T-cell (primary cell): ENCODE measurements at regions of chr2 and their contacts with region 1.

Region 1: GRCh38 chr2:219229305-219230058 is at the starts of genes ANKZF1 and ATG9A:
- DNase-seq: peak; percentile 94 to 100 (median 99)
- ATAC-seq: peak; percentile 97 to 98 (median 98)
- H3K4me3 ChIP-seq: peak within 1 kb of the TSS; percentile 72 to 85
- H3K4me3 Mint-ChIP-seq: peak within 1 kb of the TSS; percentile 97 to 99 (median 98)
- H3K27ac ChIP-seq: peak within 1 kb of the TSS; percentile 71
- H3K27ac Mint-ChIP-seq: peak within 1 kb of the TSS; percentile 98 to 99
- H3K4me1 ChIP-seq: peaks cover 16 to 37% of the 10 kb centered on the region in 2 experiments
- H3K4me1 Mint-ChIP-seq: peaks cover 55 to 76% (median 62%) of the 10 kb centered on the region in 3 donors
- H3K27me3 ChIP-seq: no peaks in the 10 kb centered on the region
- H3K27me3 Mint-ChIP-seq: no peaks in the 10 kb centered on the region
- total RNA-seq, gene ANKZF1: 119 to 220 (median 194) TPM
- total RNA-seq, gene ATG9A: 52.5 to 72.9 (median 57.6) TPM

Region 2: GRCh38 chr2:219206442-219207253 is 22.8 kb before region 1 on chr2 and contains the start of gene ZFAND2B:
- CTCF ChIA-PET with region 1: interaction called in 1 of 2 experiments, 5 read pairs
- POLR2A ChIA-PET with region 1: interaction called in 1 of 2 experiments, 12 read pairs
- DNase-seq: peak; percentile 87 to 97 (median 93)
- ATAC-seq: peak; percentile 92 to 96 (median 94)
- H3K4me3 ChIP-seq: peak within 1 kb of the TSS; percentile 70 to 80
- H3K4me3 Mint-ChIP-seq: peak within 1 kb of the TSS; percentile 84 to 90 (median 86)
- H3K27ac ChIP-seq: peak within 1 kb of the TSS; percentile 86
- H3K27ac Mint-ChIP-seq: peak within 1 kb of the TSS; percentile 95 to 99
- H3K4me1 ChIP-seq: peaks cover 14 to 54% of the 10 kb centered on the region in 2 experiments
- H3K4me1 Mint-ChIP-seq: peaks cover 45 to 49% (median 47%) of the 10 kb centered on the region in 3 donors
- H3K27me3 ChIP-seq: no peaks in the 10 kb centered on the region
- H3K27me3 Mint-ChIP-seq: no peaks in the 10 kb centered on the region
- total RNA-seq, gene ZFAND2B: 61.7 to 91.6 (median 85.6) TPM

Region 3: DNA sequence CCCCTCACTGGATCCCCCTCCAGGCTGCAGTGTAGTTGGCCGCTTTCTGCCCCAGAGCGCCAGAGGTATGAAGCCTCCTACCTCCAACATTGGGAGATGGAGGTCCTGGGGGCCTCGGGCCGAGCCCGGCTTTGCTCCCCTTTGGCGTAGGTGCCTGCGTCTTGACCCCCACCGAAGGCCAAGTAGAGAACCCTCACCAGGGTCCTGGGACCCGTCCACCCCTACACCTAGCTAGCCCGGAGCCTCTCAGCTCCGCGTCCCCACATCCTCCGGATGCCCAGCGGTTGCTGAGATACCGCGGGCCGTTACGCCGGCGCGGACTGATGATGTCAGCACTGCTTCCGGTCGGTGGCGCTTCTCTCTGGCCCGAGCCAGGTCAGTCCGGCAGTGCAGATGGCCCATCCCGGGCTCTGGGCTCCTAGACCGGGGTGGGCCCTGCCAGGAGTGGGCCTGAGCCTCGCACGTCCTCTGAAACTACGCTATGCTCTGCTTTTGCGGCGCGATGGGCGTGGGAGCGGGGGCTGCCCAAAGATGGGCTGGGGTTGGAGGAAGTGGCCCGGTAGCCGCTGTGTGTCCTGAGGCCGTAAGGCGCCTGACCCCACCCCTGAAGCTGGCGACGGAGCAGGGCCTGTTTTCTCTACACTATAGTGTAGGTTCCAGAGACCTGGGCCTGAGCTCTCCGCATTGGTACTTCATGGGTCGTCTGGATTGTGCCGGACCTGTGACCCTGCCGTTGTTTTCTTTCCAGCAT is 15.8 kb after region 1 on chr2 and contains the starts of genes GLB1L and STK16:
- CTCF ChIA-PET with region 1: interaction called in 1 of 2 experiments, 13 read pairs
- POLR2A ChIA-PET with region 1: interaction called, 10 to 15 read pairs
- DNase-seq: peak; percentile 63 to 93 (median 81)
- ATAC-seq: peak; percentile 56 to 70 (median 66)
- H3K4me3 ChIP-seq: peak within 1 kb of the TSS; percentile 89 to 90
- H3K4me3 Mint-ChIP-seq: peak within 1 kb of the TSS; percentile 75 to 92 (median 87)
- H3K27ac ChIP-seq: peak within 1 kb of the TSS; percentile 94
- H3K27ac Mint-ChIP-seq: peak within 1 kb of the TSS; percentile 98 to 99
- H3K4me1 ChIP-seq: peaks cover 42 to 62% of the 10 kb centered on the region in 2 experiments
- H3K4me1 Mint-ChIP-seq: peaks cover 56 to 66% (median 59%) of the 10 kb centered on the region in 3 donors
- H3K27me3 ChIP-seq: no peaks in the 10 kb centered on the region
- H3K27me3 Mint-ChIP-seq: no peaks in the 10 kb centered on the region
- total RNA-seq, gene GLB1L: 1.1 to 3.0 (median 1.8) TPM
- total RNA-seq, gene STK16: 19.3 to 26.6 (median 21.3) TPM

Region 4: GRCh38 chr2:219253753-219254590 is 24.5 kb after region 1 on chr2 and contains the start of gene TUBA4A:
- CTCF ChIA-PET with region 1: interaction called, 3 to 11 read pairs
- POLR2A ChIA-PET with region 1: interaction called, 10 to 11 read pairs
- DNase-seq: peak; percentile 82 to 96 (median 89)
- ATAC-seq: peak; percentile 77 to 87 (median 78)
- H3K4me3 ChIP-seq: peak within 1 kb of the TSS; percentile 95 to 99
- H3K4me3 Mint-ChIP-seq: peak within 1 kb of the TSS; percentile 75 to 96 (median 83)
- H3K27ac ChIP-seq: peak within 1 kb of the TSS; percentile 94
- H3K27ac Mint-ChIP-seq: peak within 1 kb of the TSS; percentile 98 to 99
- H3K4me1 ChIP-seq: peaks cover 25 to 47% of the 10 kb centered on the region in 2 experiments
- H3K4me1 Mint-ChIP-seq: peaks cover 47 to 48% (median 48%) of the 10 kb centered on the region in 3 donors
- H3K27me3 ChIP-seq: no peaks in the 10 kb centered on the region
- H3K27me3 Mint-ChIP-seq: no peaks in the 10 kb centered on the region
- total RNA-seq, gene TUBA4A: 108 to 196 (median 121) TPM

Region 5: DNA sequence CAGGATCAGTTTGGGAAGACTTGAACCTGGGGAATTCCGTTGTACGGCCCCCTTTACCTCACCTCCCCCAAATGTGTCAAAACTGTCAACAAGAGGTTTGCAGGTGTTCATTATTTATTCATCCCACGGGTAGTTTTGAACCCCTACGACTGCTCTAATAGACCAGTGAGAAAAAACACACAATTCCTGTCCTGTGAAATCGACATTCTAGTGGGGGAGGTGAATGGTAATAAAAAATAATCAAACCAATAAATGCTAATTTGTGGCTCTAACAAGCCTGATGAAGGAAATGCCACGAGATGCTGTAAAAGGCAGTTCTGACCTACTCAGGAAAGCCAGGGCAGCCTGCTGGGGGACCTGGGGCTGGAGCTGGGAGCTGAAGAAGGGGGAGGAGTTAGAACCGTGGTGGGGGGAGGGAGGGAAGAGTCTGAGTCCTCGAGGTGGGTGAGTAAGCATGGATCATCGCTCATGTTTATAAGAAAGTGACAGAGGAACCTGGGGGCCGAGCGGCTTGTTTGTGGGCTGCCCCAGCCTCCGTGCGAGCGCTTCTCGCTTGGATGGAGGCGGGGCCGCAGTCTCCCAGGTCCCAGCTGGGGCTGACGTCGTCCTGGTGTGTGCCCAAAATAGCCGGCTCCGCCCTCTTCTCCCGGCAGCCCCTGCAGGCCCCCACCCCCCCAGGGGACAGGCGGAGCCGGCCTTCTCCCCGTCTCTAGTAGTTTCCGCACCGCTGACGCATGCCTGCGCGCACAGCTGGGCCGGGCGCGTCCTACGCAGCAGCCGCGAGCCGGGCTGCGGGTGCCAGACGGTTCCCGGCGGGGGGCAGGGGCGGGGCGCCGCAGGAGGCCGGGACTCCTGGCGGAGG is 49.4 kb after region 1 on chr2 and contains the start of gene DNAJB2:
- CTCF ChIA-PET with region 1: interaction called, 7 to 14 read pairs
- POLR2A ChIA-PET with region 1: interaction called in 1 of 2 experiments, 5 read pairs
- DNase-seq: peak; percentile 91 to 100 (median 99)
- ATAC-seq: peak; percentile 82 to 93 (median 92)
- H3K4me3 ChIP-seq: peak within 1 kb of the TSS; percentile 76 to 93
- H3K4me3 Mint-ChIP-seq: peak within 1 kb of the TSS; percentile 85 to 98 (median 97)
- H3K27ac ChIP-seq: peak within 1 kb of the TSS; percentile 100
- H3K27ac Mint-ChIP-seq: peak within 1 kb of the TSS; percentile 99
- H3K4me1 ChIP-seq: peaks cover 11 to 42% of the 10 kb centered on the region in 2 experiments
- H3K4me1 Mint-ChIP-seq: peaks cover 43 to 54% (median 49%) of the 10 kb centered on the region in 3 donors
- H3K27me3 ChIP-seq: no peaks in the 10 kb centered on the region
- H3K27me3 Mint-ChIP-seq: no peaks in the 10 kb centered on the region
- total RNA-seq, gene DNAJB2: 83.0 to 150 (median 91.8) TPM